GM10248 (cell line): ENCODE measurements at regions of chr9 and their contacts with region 1.

Region 1: GRCh38 chr9:137114610-137115391 is at the start of gene DPP7:
- DNase-seq: peak; percentile 94
- CTCF ChIP-seq: no peak

Region 2: GRCh38 chr9:137129456-137130175 is 14.8 kb after region 1 on chr9:
- CTCF ChIA-PET with region 1: interaction called, 19 read pairs
- POLR2A ChIA-PET with region 1: no interaction called
- DNase-seq: peak; percentile 93
- CTCF ChIP-seq: no peak